ENCODE measurements at regions of chr21 and their contacts with region 1.

Region 1: GRCh38 chr21:46622226-46622625 is 13.2 kb upstream of the PRMT2 start:
- DNase-seq: peak; percentile 25 to 92 (median 61)
- ATAC-seq: peak; percentile 75
- H3K4me3 ChIP-seq: peak overlapping the region in 1 of 2 experiments; percentile 1
- H3K4me3 Mint-ChIP-seq: peak overlapping the region; percentile 40
- H3K27ac ChIP-seq: peak overlapping the region; percentile 72 to 75
- H3K27ac Mint-ChIP-seq: peak overlapping the region; percentile 88
- H3K4me1 ChIP-seq: peaks cover 77% of the 10 kb centered on the region
- H3K4me1 Mint-ChIP-seq: peaks cover 71% of the 10 kb centered on the region
- H3K27me3 ChIP-seq: no peaks in the 10 kb centered on the region
- H3K27me3 Mint-ChIP-seq: no peaks in the 10 kb centered on the region
- CTCF ChIP-seq: no peak

Region 2: GRCh38 chr21:46559291-46559983 is 62.8 kb before region 1 on chr21:
- CTCF ChIA-PET with region 1: no interaction called
- POLR2A ChIA-PET with region 1: interaction called, 10 read pairs
- intact Hi-C with region 1: no loop called
- DNase-seq: peak; percentile 31 to 88 (median 72)
- ATAC-seq: peak; percentile 77
- H3K4me3 ChIP-seq: peak overlapping the region; percentile 15 to 30
- H3K4me3 Mint-ChIP-seq: peak overlapping the region; percentile 73
- H3K27ac ChIP-seq: peak overlapping the region; percentile 67 to 75
- H3K27ac Mint-ChIP-seq: peak overlapping the region; percentile 97
- H3K4me1 ChIP-seq: peaks cover 95% of the 10 kb centered on the region
- H3K4me1 Mint-ChIP-seq: peaks cover 84% of the 10 kb centered on the region
- H3K27me3 ChIP-seq: no peaks in the 10 kb centered on the region
- H3K27me3 Mint-ChIP-seq: no peaks in the 10 kb centered on the region
- CTCF ChIP-seq: no peak

Region 3: DNA sequence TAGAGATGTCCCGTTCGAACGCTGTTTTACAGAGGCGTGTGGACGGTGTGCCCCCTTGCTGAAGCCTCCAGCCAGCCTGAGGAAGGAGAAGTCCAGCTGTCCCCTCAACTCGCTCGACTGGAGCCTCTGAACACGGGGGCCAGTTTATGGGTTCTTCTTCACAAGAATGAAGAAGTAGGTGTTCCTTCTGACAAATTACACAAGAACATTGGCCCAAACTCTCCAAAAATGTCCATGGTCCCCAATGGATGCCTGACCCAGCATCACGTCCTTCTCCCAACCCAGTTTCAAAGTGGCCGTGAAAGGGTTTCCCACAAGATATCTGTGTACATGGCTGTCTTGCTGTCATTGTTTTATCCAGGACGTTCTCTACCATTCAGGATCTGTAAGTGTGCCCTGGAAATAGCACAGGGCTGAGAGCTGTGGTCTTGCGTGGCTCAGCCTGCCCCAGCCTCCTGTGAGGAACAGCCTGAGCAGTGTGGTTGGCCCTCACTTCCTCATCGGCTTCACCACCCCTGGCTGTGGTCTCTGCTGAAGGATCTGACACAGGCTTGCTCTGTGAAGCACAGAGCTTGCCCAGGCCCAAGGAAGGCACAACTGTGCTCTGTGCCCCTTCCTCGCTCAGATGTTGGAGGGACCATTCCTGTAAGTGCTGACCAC is 16.3 kb before region 1 on chr21:
- CTCF ChIA-PET with region 1: interaction called, 13 read pairs
- POLR2A ChIA-PET with region 1: interaction called, 5 read pairs
- intact Hi-C with region 1: loop called in 1 of 2 experiments (anchors 2 kb)
- DNase-seq: peak; percentile 26 to 80 (median 61)
- ATAC-seq: peak; percentile 82
- H3K4me3 ChIP-seq: peak overlapping the region; percentile 12 to 21
- H3K4me3 Mint-ChIP-seq: peak overlapping the region; percentile 78
- H3K27ac ChIP-seq: peak overlapping the region in 1 of 2 experiments; percentile 61
- H3K27ac Mint-ChIP-seq: peak overlapping the region; percentile 88
- H3K4me1 ChIP-seq: peaks cover 43% of the 10 kb centered on the region
- H3K4me1 Mint-ChIP-seq: peaks cover 64% of the 10 kb centered on the region
- H3K27me3 ChIP-seq: no peaks in the 10 kb centered on the region
- H3K27me3 Mint-ChIP-seq: no peaks in the 10 kb centered on the region
- CTCF ChIP-seq: no peak

Region 4: DNA sequence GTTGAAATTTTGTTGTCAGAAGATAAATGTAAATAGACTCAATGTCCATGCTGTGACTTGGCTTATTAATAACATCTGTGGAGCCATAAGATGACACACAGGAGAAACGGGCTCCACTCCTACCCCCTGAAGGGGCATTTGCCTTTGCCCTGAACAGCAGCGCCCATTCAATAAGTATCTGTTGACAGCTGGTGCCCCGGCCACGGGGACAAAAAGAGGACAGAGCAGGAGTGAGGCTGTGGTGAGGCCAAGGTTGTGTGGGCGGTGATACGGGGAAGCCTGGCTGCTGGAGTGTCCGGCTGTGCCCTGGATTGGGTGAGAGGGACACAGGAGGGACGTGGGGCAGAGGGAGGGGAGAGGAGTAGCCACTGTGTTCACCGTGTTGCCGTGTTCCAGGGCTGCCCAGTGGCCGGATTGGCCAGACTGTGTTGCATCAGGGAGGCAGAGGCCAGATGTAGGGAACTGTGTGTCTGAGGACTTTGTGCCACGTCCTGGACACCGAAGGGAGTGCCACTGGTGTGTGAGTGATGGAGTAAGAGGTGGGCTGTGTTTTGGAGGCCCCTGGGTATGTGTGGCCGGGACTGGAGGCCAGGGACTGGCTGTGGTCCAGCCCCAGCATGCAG is 28.4 kb after region 1 on chr21:
- CTCF ChIA-PET with region 1: no interaction called
- POLR2A ChIA-PET with region 1: no interaction called
- intact Hi-C with region 1: no loop called
- DNase-seq: no peak
- ATAC-seq: no peak
- H3K4me3 ChIP-seq: no peak overlapping the region
- H3K4me3 Mint-ChIP-seq: no peak overlapping the region
- H3K27ac ChIP-seq: no peak overlapping the region
- H3K27ac Mint-ChIP-seq: peak overlapping the region; percentile 87
- H3K4me1 ChIP-seq: peaks cover 30% of the 10 kb centered on the region
- H3K4me1 Mint-ChIP-seq: peaks cover 46% of the 10 kb centered on the region
- H3K27me3 ChIP-seq: no peaks in the 10 kb centered on the region
- H3K27me3 Mint-ChIP-seq: no peaks in the 10 kb centered on the region
- CTCF ChIP-seq: no peak

Measured in CD8-positive, alpha-beta T cell (primary cell).